ENCODE measurements at regions of chr11 and their contacts with region 1.

Region 1: DNA sequence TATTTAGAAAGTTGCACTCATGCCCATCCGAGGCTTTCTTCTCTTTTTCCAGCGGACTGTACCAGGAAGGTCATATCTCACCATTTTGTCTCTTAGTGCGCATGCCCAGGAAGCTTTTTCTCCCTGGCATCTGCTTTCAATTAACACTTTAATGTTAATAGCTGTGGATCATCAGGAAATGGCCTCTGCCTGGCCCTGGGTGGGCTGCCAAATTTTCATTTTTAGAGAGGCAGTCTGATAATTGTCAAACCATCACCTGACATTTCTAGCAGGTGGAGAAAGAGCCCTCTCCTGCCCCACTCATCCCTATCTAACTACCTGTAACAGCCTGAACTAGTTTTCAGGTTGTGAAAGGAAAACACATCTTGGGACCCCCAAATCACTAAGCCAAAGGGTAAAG is 257.4 kb upstream of the LRRC4C start:
- DNase-seq: no peak
- H3K4me3 ChIP-seq: no peak overlapping the region
- H3K27ac ChIP-seq: no peak overlapping the region
- H3K4me1 ChIP-seq: no peaks in the 10 kb centered on the region
- H3K27me3 ChIP-seq: no peaks in the 10 kb centered on the region
- CTCF ChIP-seq: no peak
- EP300 ChIP-seq: no peak
- POLR2A ChIP-seq: no peak

Region 2: GRCh38 chr11:41659970-41660369 is 56.9 kb before region 1 on chr11:
- intact Hi-C with region 1: loop called in 1 of 4 experiments (anchors 2 kb)
- DNase-seq: no peak
- H3K4me3 ChIP-seq: no peak overlapping the region
- H3K27ac ChIP-seq: no peak overlapping the region
- H3K4me1 ChIP-seq: no peaks in the 10 kb centered on the region
- H3K27me3 ChIP-seq: no peaks in the 10 kb centered on the region
- CTCF ChIP-seq: no peak
- EP300 ChIP-seq: no peak
- POLR2A ChIP-seq: no peak

Measured in ovary (tissue), 10 donors.